ENCODE measurements at regions of chr11 and their contacts with region 1.

Region 1: DNA sequence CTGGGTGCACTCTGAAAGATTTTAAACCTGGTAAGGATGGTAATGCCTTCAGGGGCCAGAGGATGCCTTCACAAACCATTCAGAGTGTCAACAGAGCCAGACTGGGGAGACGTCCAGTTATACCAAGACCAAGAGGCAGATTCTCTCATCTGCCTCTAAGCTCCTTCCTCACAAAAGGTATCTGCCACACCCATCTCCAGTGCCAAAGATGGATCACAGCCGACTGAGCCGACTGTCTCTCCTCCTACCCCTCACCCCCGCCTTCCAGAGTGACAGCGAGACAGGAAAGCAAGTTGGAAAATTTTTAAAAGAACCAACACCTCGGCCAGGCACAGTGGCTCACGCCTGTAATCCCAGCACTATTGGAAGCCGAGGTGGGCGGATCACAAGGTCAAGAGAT is 79.1 kb upstream of the AKIP1 start:
- DNase-seq: no peak
- ATAC-seq: no peak
- H3K4me3 ChIP-seq: no peak overlapping the region
- H3K27ac ChIP-seq: no peak overlapping the region
- H3K4me1 ChIP-seq: peaks cover 21% of the 10 kb centered on the region; the same call in 2 of the 3 replicates
- CTCF ChIP-seq: no peak
- EP300 ChIP-seq: no peak
- POLR2A ChIP-seq: no peak
- RAD21 ChIP-seq: no peak

Region 2: GRCh38 chr11:8863838-8864237 is 32.0 kb after region 1 on chr11:
- CTCF ChIA-PET with region 1: interaction called, 3 read pairs
- POLR2A ChIA-PET with region 1: interaction called, 12 read pairs
- DNase-seq: no peak
- ATAC-seq: peak in 1 of 2 experiments; percentile 25; a peak in 1 of 6 replicates
- H3K4me3 ChIP-seq: no peak overlapping the region
- H3K27ac ChIP-seq: no peak overlapping the region
- H3K4me1 ChIP-seq: peaks cover 6% of the 10 kb centered on the region
- CTCF ChIP-seq: no peak
- EP300 ChIP-seq: no peak
- POLR2A ChIP-seq: no peak
- RAD21 ChIP-seq: no peak

Measured in A549 (cell line).